Cardiac septum (tissue), 1 donor: ENCODE measurements at regions of chr5 and their contacts with region 1.

Region 1: GRCh38 chr5:128213340-128213739 is 129.8 kb downstream of the SLC12A2 start:
- DNase-seq: no peak

Region 2: DNA sequence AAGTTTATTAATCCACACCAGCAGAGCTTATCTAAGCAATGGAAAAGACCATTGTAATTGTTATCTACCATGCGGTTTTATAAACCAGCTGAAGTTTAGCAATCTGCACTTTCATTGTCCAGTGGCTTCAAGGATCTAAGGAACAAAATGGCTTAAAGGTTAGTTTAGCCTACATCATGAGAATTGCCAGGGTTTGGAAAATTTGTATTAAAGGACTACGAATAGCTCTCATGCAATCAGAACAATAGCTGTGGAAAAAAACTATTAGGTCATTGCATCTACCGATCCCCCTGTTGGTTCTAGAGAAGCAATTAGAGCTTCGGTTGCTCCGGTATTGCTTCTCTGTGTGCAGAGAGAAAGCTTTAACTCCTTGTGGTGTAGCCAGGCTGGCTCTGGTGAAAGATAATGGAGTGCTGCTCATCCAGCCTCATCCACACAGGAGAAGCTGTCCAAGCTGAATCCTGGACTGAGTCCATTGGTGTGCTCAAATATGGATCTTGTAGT is 216.1 kb before region 1 on chr5:
- intact Hi-C with region 1: no loop called
- DNase-seq: no peak

Region 3: DNA sequence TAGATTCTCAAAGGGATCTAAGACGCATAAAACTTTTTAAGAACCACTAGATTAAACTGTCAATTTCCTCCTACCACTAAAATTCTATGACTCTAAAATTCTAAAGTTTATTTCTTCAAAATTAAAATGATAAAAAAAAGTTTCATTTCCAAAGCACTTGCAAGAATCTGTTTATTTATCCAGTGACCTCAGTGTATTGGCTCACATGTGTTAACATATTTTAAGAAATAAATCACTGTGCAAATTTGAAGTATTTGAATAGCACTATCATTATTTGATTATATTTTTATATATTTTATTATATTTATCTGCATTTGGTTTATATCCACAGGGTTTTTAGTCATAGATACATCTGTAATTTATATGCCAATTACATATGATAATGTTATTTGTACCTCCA is 191.9 kb before region 1 on chr5:
- intact Hi-C with region 1: no loop called
- DNase-seq: no peak

Region 4: DNA sequence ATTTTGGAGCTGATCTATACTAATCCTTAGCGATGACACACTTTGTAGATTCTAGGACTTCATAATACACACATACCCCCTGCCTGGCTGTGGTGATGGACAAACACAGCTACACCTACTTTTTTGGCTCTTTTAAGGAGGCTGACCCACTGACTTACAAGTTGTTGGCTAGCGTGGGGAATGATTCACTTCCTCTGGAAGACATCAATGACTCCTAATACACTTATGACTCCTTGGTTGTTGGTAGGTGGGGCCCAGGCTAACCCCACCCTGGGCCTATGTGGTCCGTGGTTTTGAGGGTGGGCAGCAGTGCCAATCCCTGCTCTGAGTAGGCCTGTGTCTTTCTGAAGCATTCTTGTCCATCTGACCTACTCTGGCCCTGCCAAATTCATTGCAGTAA is 14.7 kb after region 1 on chr5:
- intact Hi-C with region 1: no loop called
- DNase-seq: no peak

Region 5: GRCh38 chr5:128498844-128499455 is 285.6 kb after region 1 on chr5:
- intact Hi-C with region 1: loop called (anchors 1 kb)
- DNase-seq: no peak

Region 6: DNA sequence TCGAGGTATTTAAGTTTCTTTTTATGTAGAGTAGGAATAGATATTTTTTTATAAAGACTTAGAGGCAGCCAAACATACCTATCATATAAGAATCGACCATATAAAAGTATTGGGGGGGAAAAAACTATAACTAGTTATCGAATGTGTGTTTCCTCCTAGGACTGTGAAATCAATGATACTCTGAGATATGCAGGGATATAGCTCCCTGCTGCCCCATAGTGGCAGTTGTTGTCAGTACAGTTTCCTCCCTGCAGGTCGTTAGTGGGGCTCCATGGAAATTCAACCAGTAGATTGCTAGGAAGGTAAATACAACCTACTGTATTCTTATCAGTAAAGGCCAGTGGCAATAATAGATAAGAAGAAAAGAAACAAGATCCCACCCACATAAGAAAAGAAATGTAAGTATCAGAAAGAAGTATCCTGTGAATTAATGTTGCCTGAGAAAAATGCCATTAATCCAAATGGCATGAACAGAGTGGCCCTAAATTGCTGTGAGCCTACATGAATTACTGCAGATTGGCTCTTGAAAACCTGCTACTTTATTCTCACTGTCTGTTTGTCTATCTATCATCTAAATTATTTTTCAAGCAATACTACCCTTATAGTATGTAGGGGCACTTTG is 461.6 kb after region 1 on chr5:
- intact Hi-C with region 1: loop called (anchors 10 kb)
- DNase-seq: no peak